PC-9 (cell line): ENCODE measurements at regions of chr5 and their contacts with region 1.

Region 1: GRCh38 chr5:16521521-16522483 is 56.2 kb upstream of the ZNF622 start:
- DNase-seq: no peak
- H3K4me3 ChIP-seq: no peak overlapping the region
- H3K27ac ChIP-seq: no peak overlapping the region
- H3K4me1 ChIP-seq: no peaks in the 10 kb centered on the region
- H3K27me3 ChIP-seq: no peaks in the 10 kb centered on the region
- CTCF ChIP-seq: no peak

Region 2: DNA sequence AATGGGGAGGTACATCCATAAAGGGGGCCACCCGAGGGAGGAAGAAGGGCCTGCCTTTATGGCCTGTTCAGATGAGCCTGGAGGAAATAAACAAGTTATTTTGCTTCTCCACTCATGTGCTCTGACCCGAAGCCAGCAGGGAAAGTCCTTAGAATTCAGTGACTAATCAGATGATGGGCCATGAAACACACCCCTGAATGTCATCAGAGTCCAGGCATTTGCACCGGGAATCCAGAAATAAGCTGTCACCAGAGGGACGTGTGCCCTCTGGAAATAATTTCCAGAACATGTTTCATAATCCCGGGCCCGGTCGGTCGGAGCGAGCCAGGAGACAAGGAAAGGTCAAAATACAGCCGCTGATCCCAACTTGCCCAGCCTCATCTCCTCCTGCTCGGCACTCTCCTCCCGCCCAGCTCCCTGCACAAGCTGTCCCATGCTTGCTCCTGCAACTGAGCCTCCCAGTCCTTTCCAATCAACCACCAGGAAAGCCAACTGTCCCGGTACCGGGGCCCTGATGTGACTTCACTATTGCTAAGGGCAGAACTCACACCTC is 17.4 kb after region 1 on chr5:
- CTCF ChIA-PET with region 1: interaction called, 11 read pairs
- POLR2A ChIA-PET with region 1: no interaction called
- intact Hi-C with region 1: no loop called
- DNase-seq: peak; percentile 69 to 82
- H3K4me3 ChIP-seq: no peak overlapping the region
- H3K27ac ChIP-seq: peak overlapping the region; percentile 47
- H3K4me1 ChIP-seq: peaks cover 24% of the 10 kb centered on the region
- H3K27me3 ChIP-seq: no peaks in the 10 kb centered on the region
- CTCF ChIP-seq: no peak